ENCODE measurements at regions of chr2 and their contacts with region 1.

Region 1: DNA sequence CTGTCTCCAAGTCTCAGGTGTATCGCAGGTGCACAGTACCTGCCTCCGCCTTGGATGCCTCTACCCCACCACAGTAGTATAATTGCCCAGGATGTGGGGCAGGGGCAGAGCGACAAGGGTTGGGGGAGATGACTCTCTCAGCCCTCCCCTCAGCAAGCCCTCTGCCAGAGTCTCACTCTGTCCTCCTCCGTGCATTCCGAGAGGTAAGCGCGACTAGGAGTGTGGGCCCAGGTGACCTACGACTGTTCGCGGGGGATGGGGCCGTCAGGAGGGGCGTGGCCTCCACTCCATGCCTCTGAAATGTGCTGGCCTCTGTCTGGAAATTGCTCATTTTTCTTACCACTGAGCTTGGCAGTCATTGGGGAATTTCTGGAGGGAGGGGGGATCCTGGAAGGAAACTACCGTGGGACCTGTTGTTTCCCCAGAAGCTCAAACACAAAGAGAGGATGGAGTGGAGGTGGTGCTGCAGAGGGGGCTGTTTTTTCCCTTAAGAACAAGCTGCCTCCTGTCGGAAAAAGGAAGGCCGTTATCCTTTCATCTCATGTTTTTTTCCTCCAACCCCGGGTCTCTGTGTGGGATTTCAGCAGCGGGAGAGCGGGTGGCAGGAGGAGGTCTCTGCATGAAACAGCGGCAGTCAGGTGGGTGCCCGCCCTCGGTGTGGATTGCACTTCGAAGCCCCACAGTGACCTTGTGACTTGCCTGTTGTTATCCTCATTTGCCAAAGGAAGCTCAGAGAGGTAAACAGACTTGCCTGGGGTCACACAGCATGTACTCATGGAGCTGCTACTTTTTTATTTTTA is 13.0 kb upstream of the RALB start:
- DNase-seq: peak; percentile 28 to 86
- H3K4me3 ChIP-seq: peak overlapping the region in 1 of 2 donors; percentile 13
- H3K27ac ChIP-seq: peak overlapping the region in 1 of 2 donors; percentile 34
- H3K4me1 ChIP-seq: peaks cover 0 to 11% of the 10 kb centered on the region in 2 donors
- H3K27me3 ChIP-seq: no peaks in the 10 kb centered on the region
- CTCF ChIP-seq: no peak

Region 2: DNA sequence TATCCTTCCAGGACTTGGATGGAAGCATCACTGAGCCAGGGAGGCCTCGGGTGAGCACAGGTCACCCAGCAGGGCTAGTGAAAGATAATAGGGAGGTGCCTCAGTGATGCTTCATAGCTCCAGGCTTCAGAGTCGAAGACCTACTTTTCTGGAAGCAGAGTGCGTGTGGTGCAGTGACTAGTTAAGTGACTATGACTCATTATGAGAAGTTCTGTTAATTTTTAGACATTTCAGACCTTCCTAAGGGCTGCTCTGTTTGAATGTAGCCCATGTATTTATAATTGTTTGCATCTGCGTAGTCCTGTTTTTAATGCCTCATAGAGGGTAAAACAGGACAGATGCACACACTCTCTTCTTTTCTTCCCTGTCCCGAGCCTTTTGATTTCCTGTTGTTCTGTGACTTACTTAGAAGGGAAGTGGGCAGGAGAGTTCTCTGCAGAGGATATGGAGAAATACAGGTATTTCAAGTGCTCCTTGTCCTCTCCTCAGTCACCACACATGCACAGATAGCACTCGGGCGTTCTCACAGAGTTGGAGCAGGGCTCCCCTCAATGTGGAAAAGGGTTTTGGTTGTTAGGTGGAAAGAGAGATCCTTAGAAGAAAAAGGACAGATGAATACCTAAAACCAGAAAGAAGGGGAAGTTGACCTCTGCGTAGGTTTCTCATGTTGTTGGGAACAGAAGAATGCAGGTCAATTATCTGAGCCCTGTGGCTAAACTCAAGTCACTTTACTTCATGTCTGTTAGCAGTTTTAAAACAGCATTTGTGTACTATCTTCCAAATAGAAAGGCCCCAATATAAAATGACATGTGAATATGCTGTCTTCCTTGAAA is 47.7 kb after region 1 on chr2:
- intact Hi-C with region 1: loop called (anchors 2 kb)
- DNase-seq: no peak
- H3K4me3 ChIP-seq: no peak overlapping the region
- H3K27ac ChIP-seq: no peak overlapping the region
- H3K4me1 ChIP-seq: no peaks in the 10 kb centered on the region
- H3K27me3 ChIP-seq: no peaks in the 10 kb centered on the region
- CTCF ChIP-seq: no peak

Region 3: DNA sequence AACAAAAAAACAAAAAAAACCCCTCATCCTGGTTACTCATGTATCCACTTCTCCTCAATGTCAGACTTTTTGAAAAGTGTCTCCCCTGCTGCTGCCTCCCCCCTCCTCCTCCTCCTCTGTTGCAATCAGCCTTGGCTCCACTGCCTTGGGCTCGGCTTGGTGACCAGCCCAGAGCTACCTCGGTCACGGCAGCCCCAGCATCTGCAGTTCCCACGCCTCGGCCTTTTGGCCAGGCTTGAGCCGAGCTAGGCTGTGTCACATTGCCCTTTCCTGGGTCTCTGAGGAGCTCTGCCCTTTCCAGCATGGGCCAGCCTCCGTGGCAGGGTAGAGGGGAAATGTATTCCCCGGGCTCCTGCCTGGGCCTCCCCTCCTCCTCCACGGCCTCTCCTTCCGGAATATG is 83.5 kb after region 1 on chr2:
- intact Hi-C with region 1: no loop called
- DNase-seq: peak in 1 of 2 donors; percentile 80
- H3K4me3 ChIP-seq: no peak overlapping the region
- H3K27ac ChIP-seq: peak overlapping the region in 1 of 2 donors; percentile 50
- H3K4me1 ChIP-seq: peaks cover 0 to 5% of the 10 kb centered on the region in 2 donors
- H3K27me3 ChIP-seq: no peaks in the 10 kb centered on the region
- CTCF ChIP-seq: no peak

Region 4: DNA sequence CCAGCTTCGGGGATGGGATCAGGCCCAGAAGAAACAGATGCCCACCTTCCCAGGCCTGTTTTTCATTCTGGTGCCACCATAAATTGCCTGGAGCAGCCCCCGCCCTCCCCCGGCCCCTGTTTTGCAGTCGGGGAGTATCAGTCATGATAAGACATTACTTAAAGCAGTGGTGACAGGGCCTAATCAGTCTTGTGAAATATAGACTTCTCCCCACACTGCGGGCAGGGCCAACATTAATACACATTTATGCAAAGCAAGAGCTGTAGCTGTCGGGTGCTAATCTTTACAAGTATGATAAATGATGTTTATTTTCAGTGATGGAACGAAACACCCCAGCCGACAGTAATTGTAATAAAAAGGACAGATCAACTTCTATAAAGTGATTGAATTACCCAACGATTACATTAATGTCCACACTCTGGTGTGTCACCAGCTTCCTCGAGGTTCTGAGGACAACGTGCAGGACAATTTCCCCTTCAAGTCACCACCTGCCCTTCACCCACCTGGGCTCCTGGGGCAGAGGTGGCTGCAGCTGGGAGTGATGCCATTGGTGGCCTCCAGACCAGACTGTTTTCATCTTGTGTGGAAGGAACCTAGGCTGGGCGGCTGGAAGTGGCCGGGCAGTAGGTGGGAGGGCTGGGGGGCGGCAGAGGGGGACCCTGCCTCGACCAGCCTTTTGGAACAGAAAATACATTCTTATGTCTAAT is 819.3 kb after region 1 on chr2:
- intact Hi-C with region 1: no loop called
- DNase-seq: no peak
- H3K4me3 ChIP-seq: no peak overlapping the region
- H3K27ac ChIP-seq: no peak overlapping the region
- H3K4me1 ChIP-seq: no peaks in the 10 kb centered on the region
- H3K27me3 ChIP-seq: no peaks in the 10 kb centered on the region
- CTCF ChIP-seq: no peak